ENCODE measurements at regions of chr12 and their contacts with region 1.

Region 1: GRCh38 chr12:12562585-12563261 is at the start of gene DUSP16:
- DNase-seq: peak; percentile 93 to 98
- H3K4me3 ChIP-seq: peak within 1 kb of the TSS; percentile 57 to 94 (median 76)
- H3K27ac ChIP-seq: peak within 1 kb of the TSS; percentile 99 to 100 (median 100)
- H3K4me1 ChIP-seq: peaks cover 15 to 40% (median 31%) of the 10 kb centered on the region in 4 donors
- H3K27me3 ChIP-seq: no peaks in the 10 kb centered on the region
- CTCF ChIP-seq: peak in 2 of 7 experiments; percentile 9 to 38
- EP300 ChIP-seq: no peak
- POLR2A ChIP-seq: no peak
- total RNA-seq, gene DUSP16: 11.3 to 34.8 (median 32.0) TPM

Region 2: GRCh38 chr12:12384571-12385340 is 178.0 kb before region 1 on chr12:
- intact Hi-C with region 1: no loop called
- DNase-seq: peak in 1 of 2 donors; percentile 64
- H3K4me3 ChIP-seq: no peak overlapping the region
- H3K27ac ChIP-seq: peak overlapping the region; percentile 32 to 71 (median 61)
- H3K4me1 ChIP-seq: peaks cover 0 to 30% (median 16%) of the 10 kb centered on the region in 4 donors
- H3K27me3 ChIP-seq: no peaks in the 10 kb centered on the region
- CTCF ChIP-seq: no peak
- EP300 ChIP-seq: no peak
- POLR2A ChIP-seq: no peak

Region 3: DNA sequence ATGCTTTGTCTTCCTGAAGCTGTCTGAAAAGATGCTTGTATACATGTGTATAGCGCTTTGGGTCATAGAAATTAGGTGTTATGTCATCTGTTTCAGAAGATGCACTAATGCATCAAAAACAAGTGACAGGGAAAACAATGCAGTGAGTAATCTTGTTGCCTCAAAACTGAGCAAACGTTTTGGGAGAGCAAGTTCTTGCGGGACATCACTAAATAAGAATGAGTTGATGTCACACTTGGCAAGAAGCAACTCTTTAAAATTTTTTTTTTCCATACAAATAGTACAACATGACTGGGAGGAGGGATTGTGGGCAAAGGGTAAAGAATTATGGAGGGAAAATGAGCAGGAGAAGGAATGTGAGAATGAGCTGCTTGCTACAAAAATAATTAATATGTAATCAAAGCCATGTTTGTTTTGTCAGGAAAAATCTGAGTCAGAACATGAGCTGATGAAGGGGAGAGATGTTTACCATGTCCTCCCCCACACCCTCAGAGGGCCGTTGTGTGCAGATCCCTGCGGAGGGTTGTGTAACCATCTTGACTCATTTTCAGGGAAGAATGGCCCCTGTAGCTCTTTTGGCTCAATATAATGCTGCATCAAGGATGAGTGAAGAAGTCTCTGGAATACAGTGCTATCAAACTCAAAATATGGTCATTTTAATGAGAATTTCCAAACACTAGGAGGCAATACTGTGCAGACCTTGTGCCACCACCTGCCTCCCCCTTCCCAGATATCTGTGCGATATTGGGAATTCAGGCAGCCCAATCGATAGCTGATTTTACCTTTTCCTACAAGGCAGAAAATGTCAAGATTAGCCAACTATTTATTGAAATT is 164.5 kb before region 1 on chr12:
- intact Hi-C with region 1: loop called (anchors 10 kb)
- DNase-seq: peak in 1 of 2 donors; percentile 77
- H3K4me3 ChIP-seq: no peak overlapping the region
- H3K27ac ChIP-seq: peak overlapping the region in 4 of 5 donors; percentile 22 to 75 (median 68)
- H3K4me1 ChIP-seq: peaks cover 14 to 44% (median 36%) of the 10 kb centered on the region in 4 donors
- H3K27me3 ChIP-seq: no peaks in the 10 kb centered on the region
- CTCF ChIP-seq: peak in 2 of 7 experiments; percentile 9
- EP300 ChIP-seq: no peak
- POLR2A ChIP-seq: no peak